GM18951 (cell line): ENCODE measurements at regions of chr2 and their contacts with region 1.

Region 1: DNA sequence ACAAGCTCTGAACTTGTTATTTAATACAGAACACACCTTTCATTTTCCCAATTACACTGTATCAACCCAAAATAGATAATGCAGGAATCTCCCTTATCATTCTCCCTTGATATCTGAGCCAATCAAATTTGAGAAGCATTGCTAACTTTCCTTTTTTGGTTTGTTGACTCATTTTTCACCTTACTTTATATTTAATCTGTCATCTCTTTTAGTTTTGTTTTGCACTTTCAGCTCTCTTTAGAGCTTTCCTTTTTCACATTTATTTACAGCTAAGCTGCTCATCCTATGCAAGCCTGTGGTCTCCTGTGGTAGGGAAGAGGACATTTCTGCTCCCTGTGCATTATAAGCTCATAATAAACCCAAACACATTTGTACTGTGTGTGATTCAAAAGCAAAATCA is 50.1 kb downstream of the ITGAV start:
- POLR2A ChIP-seq: no peak

Region 2: GRCh38 chr2:186183406-186183805 is 456.5 kb before region 1 on chr2:
- in situ Hi-C with region 1: no loop called
- POLR2A ChIP-seq: no peak

Region 3: GRCh38 chr2:186503848-186504606 is 135.9 kb before region 1 on chr2:
- in situ Hi-C with region 1: loop called (anchors 10 kb)
- POLR2A ChIP-seq: no peak

Region 4: GRCh38 chr2:186806591-186806990 is 166.7 kb after region 1 on chr2:
- in situ Hi-C with region 1: no loop called
- POLR2A ChIP-seq: no peak